AG04450 (cell line): ENCODE measurements at regions of chr14 and their contacts with region 1.

Region 1: DNA sequence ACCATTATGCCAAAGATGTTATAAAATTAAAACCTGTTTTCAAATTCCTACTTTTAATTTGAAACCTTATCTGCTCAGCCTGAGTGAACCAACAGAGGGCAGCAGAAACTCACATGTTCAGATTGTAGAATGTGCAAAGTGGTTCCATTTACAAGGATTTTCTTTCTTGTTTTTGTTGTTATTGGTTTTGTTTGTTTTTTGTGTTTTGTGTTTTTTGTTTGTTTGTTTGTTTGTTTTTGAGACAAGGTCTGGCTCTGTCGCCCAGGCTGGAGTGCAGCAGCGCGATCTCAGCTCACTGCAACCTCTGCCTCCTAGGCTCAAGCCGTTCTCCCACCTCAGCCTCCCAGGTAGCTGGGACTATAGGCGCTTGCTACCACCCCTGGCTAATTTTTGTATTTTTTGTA is 22.8 kb upstream of the GARIN2 start:
- DNase-seq: peak; percentile 27
- H3K4me3 ChIP-seq: no peak overlapping the region
- H3K27ac ChIP-seq: no peak overlapping the region
- H3K27me3 ChIP-seq: no peaks in the 10 kb centered on the region
- CTCF ChIP-seq: peak; percentile 89

Region 2: GRCh38 chr14:66771234-66771633 is 395.2 kb before region 1 on chr14:
- CTCF ChIA-PET with region 1: interaction called, 13 read pairs
- POLR2A ChIA-PET with region 1: no interaction called
- DNase-seq: no peak
- H3K4me3 ChIP-seq: no peak overlapping the region
- H3K27ac ChIP-seq: no peak overlapping the region
- H3K27me3 ChIP-seq: no peaks in the 10 kb centered on the region
- CTCF ChIP-seq: no peak

Region 3: GRCh38 chr14:67151131-67151569 is 15.3 kb before region 1 on chr14:
- CTCF ChIA-PET with region 1: interaction called, 11 read pairs
- POLR2A ChIA-PET with region 1: no interaction called
- DNase-seq: no peak
- H3K4me3 ChIP-seq: no peak overlapping the region
- H3K27ac ChIP-seq: no peak overlapping the region
- H3K27me3 ChIP-seq: no peaks in the 10 kb centered on the region
- CTCF ChIP-seq: peak; percentile 44

Region 4: DNA sequence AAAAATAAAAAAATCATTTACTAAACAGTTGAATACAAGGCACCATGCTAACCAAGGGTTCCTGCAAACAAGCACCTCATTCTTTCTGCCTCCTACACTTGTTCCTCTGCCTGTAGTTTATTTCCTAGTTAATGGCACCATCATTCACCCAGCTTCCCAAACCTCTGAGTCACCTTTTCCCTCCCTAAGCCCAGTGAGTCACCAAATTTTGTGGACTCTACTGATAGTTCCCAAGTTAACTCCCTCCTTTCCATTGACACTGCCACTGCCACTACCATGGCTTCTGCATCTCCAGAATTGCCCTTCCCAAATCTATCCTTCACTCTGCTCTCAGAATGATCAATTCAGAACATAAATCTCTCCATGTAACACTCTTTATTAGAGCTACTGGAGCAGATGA is 20.8 kb after region 1 on chr14:
- CTCF ChIA-PET with region 1: interaction called, 12 read pairs
- POLR2A ChIA-PET with region 1: no interaction called
- DNase-seq: no peak
- H3K4me3 ChIP-seq: no peak overlapping the region
- H3K27ac ChIP-seq: no peak overlapping the region
- H3K27me3 ChIP-seq: no peaks in the 10 kb centered on the region
- CTCF ChIP-seq: no peak

Region 5: DNA sequence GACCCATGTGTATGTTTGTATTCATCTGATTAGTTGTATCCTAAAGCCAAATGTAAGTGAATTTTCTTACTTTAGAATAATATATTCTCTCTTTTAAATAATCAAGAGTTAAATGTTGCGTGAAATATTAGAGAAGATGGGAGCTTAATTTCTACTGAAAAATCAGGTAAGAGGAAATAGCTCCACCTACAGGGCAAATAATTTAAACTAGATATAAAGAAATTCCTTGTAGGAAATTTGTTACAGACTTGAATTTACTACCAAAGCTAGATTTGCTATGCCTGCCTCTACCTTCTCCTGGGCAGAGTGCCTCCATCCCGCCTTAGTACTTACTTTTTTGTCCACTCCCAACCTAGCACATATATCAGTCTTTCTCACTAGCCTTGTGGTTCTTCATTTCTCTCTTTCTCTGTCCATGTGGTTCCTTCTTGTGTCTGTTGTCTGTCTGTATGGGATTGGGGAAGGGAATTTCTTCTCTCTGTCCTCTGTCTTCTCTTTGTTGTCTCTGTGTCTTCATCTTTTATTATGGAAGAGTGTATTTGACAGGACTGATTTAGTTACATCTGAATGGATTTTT is 119.5 kb after region 1 on chr14:
- CTCF ChIA-PET with region 1: interaction called, 169 read pairs
- POLR2A ChIA-PET with region 1: no interaction called
- DNase-seq: peak; percentile 16
- H3K4me3 ChIP-seq: no peak overlapping the region
- H3K27ac ChIP-seq: no peak overlapping the region
- H3K27me3 ChIP-seq: no peaks in the 10 kb centered on the region
- CTCF ChIP-seq: peak; percentile 45

Region 6: DNA sequence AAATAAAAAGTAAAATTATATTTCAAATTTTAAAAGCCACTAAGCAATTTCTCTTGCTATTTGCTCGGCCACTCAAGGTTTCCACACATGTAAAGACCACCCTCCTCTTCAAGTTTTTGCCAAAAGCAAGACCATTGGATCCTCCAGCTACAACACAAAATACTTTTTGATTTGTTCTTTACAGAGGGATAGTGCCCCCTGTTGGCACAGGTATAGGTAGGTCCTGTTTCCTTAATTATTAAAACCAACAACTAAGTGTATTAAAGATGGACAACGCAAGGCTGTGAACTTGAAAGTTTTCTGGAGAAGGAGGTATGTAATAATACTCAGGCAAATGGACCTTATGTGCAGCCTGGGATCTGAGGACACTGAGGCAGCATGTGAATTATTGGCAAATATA is 169.3 kb after region 1 on chr14:
- CTCF ChIA-PET with region 1: interaction called, 13 read pairs
- POLR2A ChIA-PET with region 1: no interaction called
- DNase-seq: no peak
- H3K4me3 ChIP-seq: no peak overlapping the region
- H3K27ac ChIP-seq: no peak overlapping the region
- H3K27me3 ChIP-seq: no peaks in the 10 kb centered on the region
- CTCF ChIP-seq: peak; percentile 48

Region 7: GRCh38 chr14:67571272-67571850 is 404.9 kb after region 1 on chr14:
- CTCF ChIA-PET with region 1: no interaction called
- POLR2A ChIA-PET with region 1: no interaction called
- DNase-seq: no peak
- H3K4me3 ChIP-seq: no peak overlapping the region
- H3K27ac ChIP-seq: no peak overlapping the region
- H3K27me3 ChIP-seq: peaks cover 24% of the 10 kb centered on the region
- CTCF ChIP-seq: peak; percentile 94